Activated CD8-positive, alpha-beta memory T cell treated with anti-CD3 and anti-CD28 coated beads, Interleukin-2, amount 10 ng/mL, durations not matched to agents 7 days and 5 days (primary cell): ENCODE measurements at regions of chr4 and their contacts with region 1.

Region 1: DNA sequence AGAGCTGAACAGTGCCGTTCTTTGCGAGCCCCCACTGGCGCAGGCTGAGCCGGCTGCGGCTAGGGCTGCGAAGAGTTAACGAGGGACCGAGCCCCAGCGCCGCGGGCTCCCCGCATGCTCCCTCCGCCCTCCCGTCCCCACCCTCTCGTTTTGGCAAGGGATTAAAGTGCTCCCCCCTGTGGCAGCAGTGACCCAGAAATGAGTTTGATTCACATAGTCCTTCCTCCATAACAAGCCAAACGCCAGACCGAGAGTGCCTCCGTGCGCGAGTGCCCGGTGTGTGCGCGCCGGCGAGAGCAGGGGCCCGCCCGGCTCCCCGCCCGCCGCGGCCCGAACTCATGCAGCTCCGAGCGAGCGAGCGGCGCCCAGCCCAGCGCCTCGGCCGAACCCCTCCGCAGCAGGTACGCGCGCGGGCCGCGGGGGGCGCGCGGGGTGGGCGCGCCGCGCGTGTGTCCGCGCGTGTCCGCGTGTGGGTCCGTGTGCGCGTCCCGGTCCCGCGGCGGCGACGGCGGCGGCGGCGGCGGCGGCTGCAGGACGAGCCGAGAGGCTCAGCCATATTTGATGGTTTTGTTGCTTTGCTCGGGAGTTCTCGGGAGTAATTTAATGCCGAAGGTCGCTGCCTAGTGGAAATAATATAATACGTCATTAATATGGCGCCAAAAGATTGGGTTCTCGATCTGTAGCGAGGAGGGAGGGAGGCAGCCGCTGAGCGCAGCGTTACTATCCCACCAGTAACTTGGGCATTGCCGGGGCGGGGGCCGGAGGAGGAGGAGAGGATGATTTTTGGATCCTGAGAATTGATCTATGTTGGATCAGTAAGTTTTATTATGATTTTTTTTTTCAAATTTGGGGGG is at the start of gene JADE1:
- DNase-seq: peak; percentile 95
- ATAC-seq: peak; percentile 68
- H3K4me3 Mint-ChIP-seq: peak within 1 kb of the TSS; percentile 98
- H3K27ac Mint-ChIP-seq: peak within 1 kb of the TSS; percentile 99
- H3K4me1 Mint-ChIP-seq: peaks cover 12% of the 10 kb centered on the region
- H3K27me3 Mint-ChIP-seq: no peaks in the 10 kb centered on the region
- total RNA-seq, gene JADE1: 30.4 to 31.2 TPM

Region 2: GRCh38 chr4:128823025-128823661 is 13.4 kb after region 1 on chr4:
- CTCF ChIA-PET with region 1: interaction called, 18 read pairs
- DNase-seq: no peak
- ATAC-seq: no peak
- H3K4me3 Mint-ChIP-seq: no peak overlapping the region
- H3K27ac Mint-ChIP-seq: no peak overlapping the region
- H3K4me1 Mint-ChIP-seq: peaks cover 44% of the 10 kb centered on the region
- H3K27me3 Mint-ChIP-seq: no peaks in the 10 kb centered on the region

Region 3: DNA sequence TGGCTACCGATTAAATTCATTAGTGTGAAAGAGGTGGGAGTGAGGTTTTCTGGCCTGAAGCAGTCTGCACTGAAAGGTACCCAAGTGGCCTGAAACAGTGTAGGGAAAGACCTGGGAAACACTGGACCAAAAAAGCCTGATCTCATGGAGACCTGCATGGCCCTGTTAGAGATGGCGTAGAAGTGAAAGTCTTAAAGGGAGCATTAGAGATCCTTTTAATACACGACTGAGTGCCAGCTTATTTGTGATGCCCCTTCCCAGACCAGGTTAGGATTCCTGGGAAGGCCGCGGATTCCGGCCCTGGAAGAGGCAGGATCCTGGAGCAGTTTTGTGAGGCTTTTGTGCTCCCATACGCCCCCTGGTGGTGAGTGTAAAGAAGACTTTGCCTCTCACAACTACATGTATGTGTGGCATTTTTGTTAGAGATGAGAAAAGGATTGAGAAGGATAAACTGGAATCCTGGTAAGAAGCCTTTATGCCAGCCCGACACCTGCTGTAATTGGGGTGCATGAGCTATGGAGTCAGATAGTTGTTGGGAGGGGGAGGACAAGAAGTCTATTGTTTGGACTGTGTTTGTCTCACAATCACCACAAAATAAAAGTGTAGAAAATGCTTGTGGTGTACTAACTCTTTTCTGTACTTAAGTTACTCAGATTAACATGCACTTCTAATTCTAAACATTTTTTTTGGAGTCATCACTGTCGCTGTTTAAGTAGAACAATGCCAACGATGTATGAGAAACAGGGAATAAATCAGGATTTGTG is 53.8 kb after region 1 on chr4:
- CTCF ChIA-PET with region 1: interaction called, 10 read pairs
- DNase-seq: peak; percentile 69
- ATAC-seq: no peak
- H3K4me3 Mint-ChIP-seq: no peak overlapping the region
- H3K27ac Mint-ChIP-seq: peak overlapping the region; percentile 80
- H3K4me1 Mint-ChIP-seq: peaks cover 47% of the 10 kb centered on the region
- H3K27me3 Mint-ChIP-seq: no peaks in the 10 kb centered on the region

Region 4: GRCh38 chr4:129093191-129093920 is 283.7 kb after region 1 on chr4 and contains the start of gene SCLT1:
- CTCF ChIA-PET with region 1: interaction called, 13 read pairs
- DNase-seq: peak; percentile 99
- ATAC-seq: peak; percentile 94
- H3K4me3 Mint-ChIP-seq: no peak within 1 kb of the TSS
- H3K27ac Mint-ChIP-seq: peak within 1 kb of the TSS; percentile 96
- H3K4me1 Mint-ChIP-seq: peaks cover 42% of the 10 kb centered on the region
- H3K27me3 Mint-ChIP-seq: no peaks in the 10 kb centered on the region
- total RNA-seq, gene SCLT1: 31.3 to 53.4 TPM